Activated CD8-positive, alpha-beta T cell treated with anti-CD3 and anti-CD28 coated beads for 36 hours (primary cell): ENCODE measurements at regions of chr7 and their contacts with region 1.

Region 1: DNA sequence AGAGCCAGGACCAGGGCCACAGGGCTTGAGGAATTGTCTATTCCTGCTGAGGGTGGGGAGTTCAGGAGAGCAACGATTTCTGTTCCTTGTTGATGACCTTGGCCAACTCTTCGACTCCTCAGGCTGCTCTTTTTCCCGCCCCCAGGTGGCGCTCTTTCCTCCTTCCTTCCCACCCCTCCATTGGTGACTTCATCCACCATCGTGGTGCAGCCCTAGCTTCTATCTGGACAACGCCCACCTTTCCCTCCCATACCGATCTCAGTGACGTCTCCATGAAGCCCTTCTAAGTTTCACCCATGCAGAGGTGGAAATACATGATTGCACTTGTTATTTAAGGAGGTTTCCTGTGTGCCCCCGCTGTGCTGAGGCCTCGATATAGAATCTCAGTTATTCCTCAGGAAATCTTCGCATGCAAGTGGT is 22.1 kb upstream of the CARD11 start:
- DNase-seq: peak; percentile 92
- ATAC-seq: peak; percentile 36
- H3K4me3 Mint-ChIP-seq: peak overlapping the region; percentile 42
- H3K27ac Mint-ChIP-seq: peak overlapping the region; percentile 88
- H3K4me1 Mint-ChIP-seq: peaks cover 86% of the 10 kb centered on the region
- H3K27me3 Mint-ChIP-seq: no peaks in the 10 kb centered on the region
- CTCF ChIP-seq: peak; percentile 63

Region 2: GRCh38 chr7:2863461-2864066 is 202.2 kb before region 1 on chr7:
- CTCF ChIA-PET with region 1: interaction called, 23 read pairs
- POLR2A ChIA-PET with region 1: no interaction called
- intact Hi-C with region 1: loop called (anchors 10 kb)
- DNase-seq: peak; percentile 92
- ATAC-seq: peak; percentile 91
- H3K4me3 Mint-ChIP-seq: peak overlapping the region; percentile 71
- H3K27ac Mint-ChIP-seq: peak overlapping the region; percentile 96
- H3K4me1 Mint-ChIP-seq: peaks cover 28% of the 10 kb centered on the region
- H3K27me3 Mint-ChIP-seq: no peaks in the 10 kb centered on the region
- CTCF ChIP-seq: no peak

Region 3: GRCh38 chr7:2978403-2978802 is 87.3 kb before region 1 on chr7:
- CTCF ChIA-PET with region 1: interaction called, 4 read pairs
- POLR2A ChIA-PET with region 1: interaction called, 3 read pairs
- intact Hi-C with region 1: loop called (anchors 10 kb)
- DNase-seq: peak; percentile 98
- ATAC-seq: peak; percentile 87
- H3K4me3 Mint-ChIP-seq: peak overlapping the region; percentile 78
- H3K27ac Mint-ChIP-seq: peak overlapping the region; percentile 93
- H3K4me1 Mint-ChIP-seq: peaks cover 67% of the 10 kb centered on the region
- H3K27me3 Mint-ChIP-seq: no peaks in the 10 kb centered on the region
- CTCF ChIP-seq: no peak

Region 4: GRCh38 chr7:3087243-3087642 is 21.5 kb after region 1 on chr7:
- CTCF ChIA-PET with region 1: interaction called, 101 read pairs
- POLR2A ChIA-PET with region 1: interaction called, 15 read pairs
- intact Hi-C with region 1: no loop called
- DNase-seq: no peak
- ATAC-seq: no peak
- H3K4me3 Mint-ChIP-seq: no peak overlapping the region
- H3K27ac Mint-ChIP-seq: no peak overlapping the region
- H3K4me1 Mint-ChIP-seq: peaks cover 27% of the 10 kb centered on the region
- H3K27me3 Mint-ChIP-seq: no peaks in the 10 kb centered on the region
- CTCF ChIP-seq: no peak

Region 5: DNA sequence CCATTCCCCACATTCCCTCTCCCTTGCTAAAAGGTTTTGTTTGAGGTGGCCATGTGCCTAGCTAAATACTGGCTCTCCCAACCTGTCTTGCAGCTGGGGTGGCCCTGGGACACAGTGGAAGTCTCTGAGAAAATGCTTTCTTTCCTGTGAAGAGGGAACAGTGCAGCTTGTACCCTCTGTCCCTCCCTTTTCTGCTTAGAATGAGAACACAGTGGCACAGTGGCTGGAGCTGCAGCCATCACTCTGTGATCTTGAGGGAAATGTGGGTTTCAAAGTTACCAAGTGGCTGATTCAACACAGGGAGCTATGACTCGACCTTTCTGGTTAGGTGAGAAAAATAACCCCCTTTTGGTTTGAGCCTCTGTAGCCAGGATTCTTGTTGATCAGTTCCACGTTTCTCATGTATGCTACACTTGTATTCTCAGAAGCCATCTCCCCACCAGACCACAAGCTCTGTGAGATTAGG is 40.7 kb after region 1 on chr7:
- CTCF ChIA-PET with region 1: interaction called, 28 read pairs
- POLR2A ChIA-PET with region 1: interaction called, 7 read pairs
- intact Hi-C with region 1: no loop called
- DNase-seq: peak; percentile 78
- ATAC-seq: peak; percentile 84
- H3K4me3 Mint-ChIP-seq: peak overlapping the region; percentile 1
- H3K27ac Mint-ChIP-seq: peak overlapping the region; percentile 94
- H3K4me1 Mint-ChIP-seq: peaks cover 78% of the 10 kb centered on the region
- H3K27me3 Mint-ChIP-seq: no peaks in the 10 kb centered on the region
- CTCF ChIP-seq: no peak

Region 6: DNA sequence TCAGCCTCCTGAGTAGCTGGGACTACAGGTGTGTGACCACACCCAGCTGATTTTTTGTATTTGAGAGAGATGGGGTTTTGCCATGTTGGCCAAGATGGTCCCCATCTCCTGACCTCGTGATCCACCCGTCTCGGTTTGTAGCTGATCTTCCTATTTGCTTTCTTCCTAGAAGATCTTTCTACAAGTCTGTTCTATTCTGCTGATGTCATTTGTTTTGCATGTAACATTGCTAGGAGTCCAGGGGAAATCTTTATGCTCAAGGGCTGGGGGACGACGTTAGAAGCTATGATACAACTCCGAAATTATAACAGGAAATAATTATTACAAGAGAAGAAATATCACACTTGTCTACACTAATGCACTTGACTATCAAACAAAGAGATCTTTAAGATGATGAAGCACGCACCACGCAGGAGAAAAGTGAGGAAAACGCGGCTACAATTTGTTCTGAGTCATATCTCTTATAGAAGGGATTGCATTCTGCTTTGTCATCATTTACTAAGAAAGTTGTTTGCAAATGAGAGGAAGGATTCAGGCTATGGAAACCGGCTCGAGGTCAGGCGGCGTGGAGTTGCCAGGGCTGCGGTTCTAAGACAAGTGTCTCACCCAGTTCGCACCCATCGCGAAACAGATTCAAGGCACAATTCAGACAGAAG is 81.0 kb after region 1 on chr7:
- CTCF ChIA-PET with region 1: interaction called, 20 read pairs
- POLR2A ChIA-PET with region 1: no interaction called
- intact Hi-C with region 1: no loop called
- DNase-seq: peak; percentile 16
- ATAC-seq: no peak
- H3K4me3 Mint-ChIP-seq: no peak overlapping the region
- H3K27ac Mint-ChIP-seq: no peak overlapping the region
- H3K4me1 Mint-ChIP-seq: peaks cover 10% of the 10 kb centered on the region
- H3K27me3 Mint-ChIP-seq: no peaks in the 10 kb centered on the region
- CTCF ChIP-seq: no peak

Region 7: GRCh38 chr7:3174515-3175284 is 109.0 kb after region 1 on chr7:
- CTCF ChIA-PET with region 1: no interaction called
- POLR2A ChIA-PET with region 1: no interaction called
- intact Hi-C with region 1: no loop called
- DNase-seq: no peak
- ATAC-seq: no peak
- H3K4me3 Mint-ChIP-seq: no peak overlapping the region
- H3K27ac Mint-ChIP-seq: no peak overlapping the region
- H3K4me1 Mint-ChIP-seq: no peaks in the 10 kb centered on the region
- H3K27me3 Mint-ChIP-seq: peaks cover 3% of the 10 kb centered on the region
- CTCF ChIP-seq: no peak

Region 8: GRCh38 chr7:3427957-3428356 is 362.2 kb after region 1 on chr7:
- CTCF ChIA-PET with region 1: no interaction called
- POLR2A ChIA-PET with region 1: no interaction called
- intact Hi-C with region 1: no loop called
- DNase-seq: peak; percentile 4
- ATAC-seq: no peak
- H3K4me3 Mint-ChIP-seq: no peak overlapping the region
- H3K27ac Mint-ChIP-seq: no peak overlapping the region
- H3K4me1 Mint-ChIP-seq: no peaks in the 10 kb centered on the region
- H3K27me3 Mint-ChIP-seq: no peaks in the 10 kb centered on the region
- CTCF ChIP-seq: no peak